Posterior vena cava (tissue), 2 donors: ENCODE measurements at regions of chr15 and their contacts with region 1.

Region 1: DNA sequence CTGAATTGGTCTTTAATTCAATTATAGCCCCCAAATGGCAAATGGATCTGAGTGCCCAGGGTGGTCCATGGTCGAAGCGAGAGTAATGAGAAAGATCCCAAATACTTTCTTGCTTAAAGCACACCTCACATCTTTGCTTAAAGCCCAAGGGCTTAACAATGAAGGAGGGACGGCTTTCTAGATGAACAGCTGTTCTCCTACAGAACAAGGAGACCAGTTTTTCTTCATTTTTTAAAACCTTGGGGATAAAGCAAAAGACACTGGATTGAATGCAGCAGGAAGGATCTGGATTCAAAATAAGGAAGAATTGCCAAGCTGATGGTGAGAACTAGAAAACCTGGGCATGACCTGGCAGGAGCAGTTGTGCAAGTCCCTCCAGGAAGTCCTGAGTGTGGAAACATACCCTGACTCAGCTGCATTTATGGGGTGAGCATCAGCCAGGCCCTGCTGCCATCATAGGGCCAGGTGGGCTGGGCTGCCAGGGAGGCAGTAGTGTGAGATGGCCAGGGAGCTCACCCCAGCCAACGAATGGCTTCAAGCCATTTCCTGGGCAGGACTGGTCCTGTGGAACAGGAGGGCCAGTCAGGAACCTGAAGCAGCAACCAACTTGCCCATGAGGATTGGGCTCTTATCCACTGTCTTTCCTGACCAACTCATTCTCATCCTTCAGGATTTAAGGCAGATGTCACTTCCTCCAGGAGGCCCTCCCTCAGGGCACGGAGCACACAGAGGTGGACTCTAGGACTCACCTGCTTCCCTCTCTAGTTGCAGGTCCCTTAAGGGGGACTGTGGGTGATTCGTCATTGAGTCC is 18.4 kb upstream of the RHCG start:
- DNase-seq: no peak

Region 2: GRCh38 chr15:89531796-89532537 is 17.2 kb after region 1 on chr15:
- intact Hi-C with region 1: no loop called
- DNase-seq: no peak

Region 3: GRCh38 chr15:89812011-89812835 is 297.4 kb after region 1 on chr15:
- intact Hi-C with region 1: no loop called
- DNase-seq: peak; percentile 91

Region 4: DNA sequence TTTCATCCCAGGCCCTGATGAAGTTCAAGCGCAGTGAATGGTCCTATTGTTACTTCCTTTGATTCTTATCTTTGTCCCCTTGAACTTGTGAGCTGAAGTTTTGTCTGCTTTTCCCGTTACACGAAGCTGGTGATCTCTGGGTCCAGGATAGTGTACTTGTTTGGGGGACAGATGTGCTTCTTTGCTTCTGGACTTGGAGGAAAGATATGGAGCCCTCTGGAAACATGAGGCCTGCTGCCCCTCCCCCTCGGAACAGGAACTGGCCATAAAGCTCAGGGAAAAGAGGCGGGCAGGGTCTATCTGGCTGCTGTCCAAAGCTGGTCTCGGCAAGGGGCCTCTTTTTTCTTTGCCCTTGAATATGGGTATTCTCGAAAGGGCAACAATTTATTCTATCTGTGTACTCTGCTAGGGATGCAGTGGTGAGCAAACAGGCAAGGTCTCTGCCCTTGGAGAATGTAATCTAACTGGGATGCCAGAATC is 539.9 kb after region 1 on chr15:
- intact Hi-C with region 1: loop called in 1 of 2 experiments (anchors 5 kb)
- DNase-seq: no peak

Region 5: DNA sequence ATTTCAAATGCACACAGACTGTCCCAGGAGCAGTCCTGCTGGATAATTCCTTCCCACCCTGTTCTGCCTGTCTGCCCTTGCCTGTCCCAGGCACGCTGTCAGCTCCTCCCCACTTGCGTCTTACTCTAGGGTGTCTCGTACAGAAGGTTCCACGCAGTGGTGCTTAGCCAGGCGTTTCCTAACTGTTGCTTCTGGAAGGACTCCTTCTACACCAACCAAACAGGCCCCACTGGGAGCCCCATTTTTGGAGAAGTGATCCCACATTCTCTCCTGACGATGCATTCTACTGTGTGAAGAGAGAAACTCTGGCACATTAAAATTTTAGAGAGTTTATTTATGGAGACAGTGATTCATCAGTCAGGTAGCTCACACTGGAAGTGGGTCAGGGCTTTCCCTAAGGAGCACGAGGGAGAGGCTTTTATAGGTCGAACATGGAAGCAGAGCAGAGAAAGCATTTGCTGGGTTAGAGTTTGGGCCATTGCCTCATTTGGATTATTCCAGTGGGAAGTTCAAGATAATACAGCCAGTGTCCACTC is 1749.3 kb after region 1 on chr15:
- intact Hi-C with region 1: no loop called
- DNase-seq: peak; percentile 91